Aorta (tissue), 5 donors: ENCODE measurements at regions of chr4 and their contacts with region 1.

Region 1: GRCh38 chr4:140252742-140253555 is 99.0 kb upstream of the MAML3 start:
- DNase-seq: peak; percentile 77 to 90
- ATAC-seq: peak; percentile 93
- H3K4me3 ChIP-seq: peak overlapping the region; percentile 48 to 70
- H3K27ac ChIP-seq: peak overlapping the region in 1 of 2 donors; percentile 31
- H3K4me1 ChIP-seq: peaks cover 0 to 4% of the 10 kb centered on the region in 2 donors
- H3K27me3 ChIP-seq: no peaks in the 10 kb centered on the region

Region 2: GRCh38 chr4:139656614-139657486 is 596.1 kb before region 1 on chr4:
- intact Hi-C with region 1: loop called in 1 of 2 experiments (anchors 5 kb)
- DNase-seq: peak; percentile 64 to 77
- ATAC-seq: peak; percentile 87
- H3K4me3 ChIP-seq: no peak overlapping the region
- H3K27ac ChIP-seq: no peak overlapping the region
- H3K4me1 ChIP-seq: no peaks in the 10 kb centered on the region
- H3K27me3 ChIP-seq: no peaks in the 10 kb centered on the region

Region 3: GRCh38 chr4:139815778-139816601 is 437.0 kb before region 1 on chr4:
- intact Hi-C with region 1: loop called in 1 of 2 experiments (anchors 10 kb)
- DNase-seq: peak; percentile 55 to 79
- ATAC-seq: peak; percentile 78
- H3K4me3 ChIP-seq: peak overlapping the region; percentile 34 to 72
- H3K27ac ChIP-seq: peak overlapping the region; percentile 30 to 82
- H3K4me1 ChIP-seq: peaks cover 4 to 8% of the 10 kb centered on the region in 2 donors
- H3K27me3 ChIP-seq: no peaks in the 10 kb centered on the region

Region 4: DNA sequence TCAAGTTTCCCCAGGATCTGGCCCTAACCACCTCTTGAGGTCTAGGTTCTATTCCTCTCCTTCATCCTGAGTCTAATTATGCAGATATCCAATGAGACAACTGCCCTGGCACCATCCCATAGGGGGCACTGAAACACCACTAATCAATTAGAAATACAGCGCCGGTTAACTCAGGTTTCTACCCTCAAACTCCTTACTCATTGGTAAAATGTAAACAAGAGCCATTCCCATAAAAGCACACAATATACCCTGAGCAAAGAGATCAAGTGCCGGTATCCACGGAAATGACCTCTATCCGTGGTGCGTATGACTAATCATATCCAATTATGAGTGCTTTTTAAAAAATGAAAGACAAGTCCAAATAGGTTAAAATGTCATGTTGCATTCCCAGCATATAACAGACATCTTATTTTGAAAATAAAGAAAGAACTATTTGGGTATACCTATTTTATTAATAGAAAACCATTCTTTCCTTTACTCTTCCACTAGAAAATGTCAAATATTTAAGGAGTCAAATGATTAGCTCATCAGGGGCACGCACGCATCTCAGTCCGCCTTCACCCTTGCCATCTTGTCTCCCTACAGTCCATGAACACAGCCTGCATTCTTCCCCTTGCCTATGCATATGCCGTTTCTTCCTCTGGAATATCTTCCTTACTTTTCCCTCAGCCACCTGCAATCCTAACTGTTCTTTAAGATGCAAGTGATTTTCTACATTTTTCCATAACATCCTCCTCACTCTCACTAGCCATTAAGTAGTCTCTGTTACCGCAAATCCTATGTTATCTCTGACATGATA is 240.1 kb before region 1 on chr4:
- intact Hi-C with region 1: loop called (anchors 5 kb)
- DNase-seq: peak in 1 of 2 donors; percentile 62
- ATAC-seq: peak; percentile 71
- H3K4me3 ChIP-seq: no peak overlapping the region
- H3K27ac ChIP-seq: no peak overlapping the region
- H3K4me1 ChIP-seq: no peaks in the 10 kb centered on the region
- H3K27me3 ChIP-seq: no peaks in the 10 kb centered on the region

Region 5: GRCh38 chr4:140153718-140154571 is 99.0 kb before region 1 on chr4 and contains the start of gene MAML3:
- intact Hi-C with region 1: loop called (anchors 1 to 2 kb)
- DNase-seq: peak; percentile 96 to 98
- ATAC-seq: peak; percentile 89
- H3K4me3 ChIP-seq: peak within 1 kb of the TSS; percentile 94 to 97
- H3K27ac ChIP-seq: peak within 1 kb of the TSS; percentile 2 to 91
- H3K4me1 ChIP-seq: no peaks in the 10 kb centered on the region
- H3K27me3 ChIP-seq: no peaks in the 10 kb centered on the region
- total RNA-seq, gene MAML3: 8.3 to 10.5 TPM

Region 6: DNA sequence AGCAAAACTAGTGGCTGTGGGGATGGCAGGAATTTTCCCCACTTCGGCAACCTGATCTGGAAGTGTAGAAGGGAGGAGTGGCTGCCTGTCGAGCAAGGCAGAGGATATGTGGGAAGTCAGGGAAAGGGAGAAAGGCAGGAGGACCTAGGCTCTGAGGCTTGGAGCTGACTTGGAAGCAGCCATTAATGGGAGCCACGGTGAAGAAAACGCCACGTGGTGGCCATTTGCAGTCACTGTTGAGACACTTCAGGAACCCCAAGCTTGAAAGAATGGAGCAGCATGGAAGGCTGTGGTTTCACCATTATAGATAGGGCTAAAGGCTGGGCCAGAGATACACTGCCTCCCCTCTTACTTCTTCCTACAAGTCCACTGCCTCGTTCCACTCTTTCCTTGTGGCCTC is 57.1 kb before region 1 on chr4:
- intact Hi-C with region 1: no loop called
- DNase-seq: no peak
- ATAC-seq: no peak
- H3K4me3 ChIP-seq: no peak overlapping the region
- H3K27ac ChIP-seq: no peak overlapping the region
- H3K4me1 ChIP-seq: no peaks in the 10 kb centered on the region
- H3K27me3 ChIP-seq: no peaks in the 10 kb centered on the region